Right lobe of liver (tissue), 6 donors: ENCODE measurements at regions of chr14 and their contacts with region 1.

Region 1: DNA sequence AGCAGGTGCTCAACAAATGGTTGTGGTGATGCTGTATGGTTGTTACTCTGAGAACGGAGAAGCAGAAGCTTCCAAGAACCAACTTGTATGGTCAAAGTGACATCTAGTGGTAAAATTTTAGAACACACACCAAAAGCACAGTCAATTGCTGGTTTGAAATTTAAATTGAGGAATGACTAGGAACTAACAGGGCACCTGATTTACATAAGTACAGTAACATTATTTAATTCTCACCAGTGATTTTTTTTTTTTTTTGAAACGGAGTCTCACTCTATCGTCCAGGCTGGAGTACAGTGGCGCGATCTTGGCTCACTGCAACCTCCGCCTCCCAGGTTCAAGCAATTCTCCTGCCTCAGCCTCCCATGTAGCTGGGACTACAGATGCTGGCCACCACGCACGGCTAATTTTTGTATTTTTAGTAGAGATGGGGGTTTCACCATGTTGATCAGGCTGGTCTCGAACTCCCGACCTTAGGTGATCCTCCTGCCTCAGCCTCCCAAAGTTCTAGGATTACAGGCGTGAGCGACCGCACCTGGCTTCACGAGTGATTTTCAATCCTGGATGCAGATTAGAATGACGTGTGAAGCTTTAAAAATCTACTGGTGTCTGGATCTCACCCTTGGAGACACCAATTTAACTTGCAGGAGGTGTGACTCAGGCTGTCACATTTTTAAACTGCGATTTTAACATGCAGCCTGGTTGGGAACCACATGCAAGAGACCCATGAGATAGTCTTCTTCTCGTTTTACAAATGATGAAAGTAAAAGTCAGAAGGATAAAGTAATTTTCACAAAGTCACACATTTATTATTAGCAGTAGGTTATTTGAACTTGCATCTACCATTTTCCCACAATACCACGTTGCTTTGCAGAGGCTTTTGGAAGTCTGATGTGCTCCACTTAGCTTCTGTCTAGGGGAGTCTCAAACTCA is 14.1 kb upstream of the NUMB start:
- DNase-seq: no peak
- ATAC-seq: peak; percentile 87 to 91 (median 88)
- H3K4me3 ChIP-seq: no peak overlapping the region
- H3K27ac ChIP-seq: no peak overlapping the region
- H3K4me1 ChIP-seq: peaks cover 0 to 10% (median 0%) of the 10 kb centered on the region in 4 donors
- H3K27me3 ChIP-seq: no peaks in the 10 kb centered on the region
- CTCF ChIP-seq: peak; percentile 59 to 87 (median 68)
- POLR2A ChIP-seq: no peak

Region 2: DNA sequence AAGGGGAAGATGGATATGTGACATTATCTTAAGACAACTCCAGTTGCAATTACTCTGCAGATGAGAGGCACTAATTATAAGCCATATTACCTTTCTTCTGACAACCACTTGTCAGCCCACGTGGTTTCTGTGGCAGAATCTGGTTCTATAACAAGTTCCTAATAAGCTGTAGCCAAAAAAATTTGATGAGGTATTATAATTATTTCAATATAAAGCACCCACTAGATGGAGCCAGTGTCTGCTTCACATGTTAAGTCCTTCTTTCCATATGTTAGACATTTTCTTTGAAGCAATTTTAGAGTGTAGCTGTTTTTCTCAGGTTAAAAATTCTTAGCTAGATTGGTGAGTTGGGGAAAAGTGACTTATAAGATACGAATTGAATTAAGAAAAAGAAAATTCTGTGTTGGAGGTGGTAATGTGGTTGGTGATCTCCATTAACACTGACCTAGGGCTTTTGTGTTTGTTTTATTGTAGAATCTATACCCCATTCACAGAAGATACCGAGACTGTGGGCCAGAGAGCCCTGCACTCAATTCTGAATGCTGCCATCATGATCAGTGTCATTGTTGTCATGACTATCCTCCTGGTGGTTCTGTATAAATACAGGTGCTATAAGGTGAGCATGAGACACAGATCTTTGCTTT is 299.2 kb before region 1 on chr14:
- intact Hi-C with region 1: loop called in 1 of 2 experiments (anchors 10 kb)
- DNase-seq: no peak
- ATAC-seq: peak; percentile 42 to 62 (median 54)
- H3K4me3 ChIP-seq: no peak overlapping the region
- H3K27ac ChIP-seq: no peak overlapping the region
- H3K4me1 ChIP-seq: no peaks in the 10 kb centered on the region
- H3K27me3 ChIP-seq: no peaks in the 10 kb centered on the region
- CTCF ChIP-seq: peak; percentile 43 to 56 (median 48)
- POLR2A ChIP-seq: no peak

Region 3: DNA sequence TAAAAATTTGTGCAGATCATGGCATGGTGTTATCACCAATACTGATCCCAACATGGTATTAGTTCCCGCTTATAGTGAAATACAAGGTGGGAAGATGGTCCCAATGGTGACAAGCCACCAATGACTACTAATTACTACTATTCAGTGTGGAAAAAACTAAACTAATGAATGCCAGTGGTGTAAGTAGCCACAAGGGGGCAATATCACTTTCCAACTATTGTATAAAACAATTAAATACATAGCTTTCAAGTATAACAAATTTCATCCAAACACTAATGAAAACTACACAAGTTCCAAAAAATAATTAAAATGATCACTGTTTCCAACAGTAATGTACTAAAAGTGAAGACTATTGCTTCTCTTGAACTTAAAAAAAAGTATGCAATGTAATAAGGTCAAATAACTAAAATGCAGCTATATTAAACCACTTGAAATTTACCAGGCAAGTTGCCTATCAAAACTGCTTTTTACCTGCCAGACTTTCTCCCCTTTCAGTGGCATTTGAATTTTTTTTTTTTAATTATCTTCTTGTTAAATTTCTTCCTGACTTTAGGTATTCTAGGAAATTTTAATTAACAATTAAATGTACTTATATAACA is 177.2 kb before region 1 on chr14:
- intact Hi-C with region 1: loop called (anchors 10 kb)
- DNase-seq: no peak
- ATAC-seq: peak; percentile 59 to 75 (median 67)
- H3K4me3 ChIP-seq: no peak overlapping the region
- H3K27ac ChIP-seq: peak overlapping the region in 1 of 3 donors; percentile 60
- H3K4me1 ChIP-seq: peaks cover 0 to 19% (median 8%) of the 10 kb centered on the region in 4 donors
- H3K27me3 ChIP-seq: no peaks in the 10 kb centered on the region
- CTCF ChIP-seq: peak; percentile 71 to 81 (median 76)
- POLR2A ChIP-seq: no peak